Breast epithelium (tissue), 4 donors: ENCODE measurements at regions of chr5 and their contacts with region 1.

Region 1: GRCh38 chr5:84274585-84275468 is 109.9 kb downstream of the EDIL3 start:
- DNase-seq: no peak
- H3K4me3 ChIP-seq: no peak overlapping the region
- H3K27ac ChIP-seq: no peak overlapping the region
- H3K4me1 ChIP-seq: no peaks in the 10 kb centered on the region
- H3K27me3 ChIP-seq: no peaks in the 10 kb centered on the region
- CTCF ChIP-seq: peak in 1 of 3 donors; percentile 37
- POLR2A ChIP-seq: no peak

Region 2: GRCh38 chr5:82664732-82665131 is 1610.1 kb before region 1 on chr5:
- intact Hi-C with region 1: no loop called
- DNase-seq: no peak
- H3K4me3 ChIP-seq: no peak overlapping the region
- H3K27ac ChIP-seq: no peak overlapping the region
- H3K4me1 ChIP-seq: no peaks in the 10 kb centered on the region
- H3K27me3 ChIP-seq: no peaks in the 10 kb centered on the region
- CTCF ChIP-seq: no peak
- POLR2A ChIP-seq: no peak

Region 3: GRCh38 chr5:83048277-83048676 is 1226.5 kb before region 1 on chr5:
- intact Hi-C with region 1: no loop called
- DNase-seq: no peak
- H3K4me3 ChIP-seq: no peak overlapping the region
- H3K27ac ChIP-seq: no peak overlapping the region
- H3K4me1 ChIP-seq: no peaks in the 10 kb centered on the region
- H3K27me3 ChIP-seq: no peaks in the 10 kb centered on the region
- CTCF ChIP-seq: no peak
- POLR2A ChIP-seq: no peak

Region 4: GRCh38 chr5:85337435-85337834 is 1062.6 kb after region 1 on chr5:
- intact Hi-C with region 1: no loop called
- DNase-seq: no peak
- H3K4me3 ChIP-seq: no peak overlapping the region
- H3K27ac ChIP-seq: no peak overlapping the region
- H3K4me1 ChIP-seq: no peaks in the 10 kb centered on the region
- H3K27me3 ChIP-seq: no peaks in the 10 kb centered on the region
- CTCF ChIP-seq: no peak
- POLR2A ChIP-seq: no peak

Region 5: DNA sequence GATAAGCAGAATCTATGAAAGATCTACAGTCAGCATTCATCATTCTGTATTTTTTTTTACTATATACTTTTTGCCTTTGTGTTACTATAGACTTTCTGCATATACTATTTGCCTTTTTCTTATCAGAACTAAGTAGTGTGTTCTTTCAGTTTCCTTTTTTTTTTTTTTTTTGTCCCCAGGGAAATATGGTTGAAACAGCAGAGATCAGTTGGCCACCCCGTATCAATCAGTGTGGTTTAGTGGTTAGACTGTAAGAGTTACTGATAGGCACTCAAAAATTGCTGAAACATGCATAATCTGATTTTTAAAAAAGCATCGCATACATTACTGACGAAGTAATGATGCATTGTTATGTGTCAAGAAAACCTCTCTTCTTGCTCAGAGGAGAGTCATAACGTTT is 1100.7 kb after region 1 on chr5:
- intact Hi-C with region 1: loop called (anchors 5 kb)
- DNase-seq: no peak
- H3K4me3 ChIP-seq: no peak overlapping the region
- H3K27ac ChIP-seq: no peak overlapping the region
- H3K4me1 ChIP-seq: no peaks in the 10 kb centered on the region
- H3K27me3 ChIP-seq: no peaks in the 10 kb centered on the region
- CTCF ChIP-seq: no peak
- POLR2A ChIP-seq: no peak